PC-3 (cell line): ENCODE measurements at regions of chr3 and their contacts with region 1.

Region 1: DNA sequence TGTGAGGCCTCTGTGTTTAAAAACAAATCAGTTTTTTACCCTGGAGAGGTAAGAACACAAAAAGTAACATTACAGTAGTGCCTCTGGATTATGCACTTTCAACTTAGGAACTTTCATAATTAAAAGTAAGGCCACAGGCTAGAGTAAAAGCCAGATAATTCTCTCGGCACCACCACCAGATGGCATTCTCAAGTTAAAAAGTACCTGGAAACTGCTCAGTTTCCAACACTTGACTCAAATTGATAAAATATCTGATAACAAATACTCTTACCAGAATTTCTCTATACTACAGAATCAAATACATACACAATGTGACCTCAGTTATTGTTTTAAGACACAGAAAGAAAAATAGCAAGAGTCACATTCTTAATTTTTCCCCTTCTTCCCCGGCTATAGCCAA is 19.9 kb downstream of the SPICE1 start:
- DNase-seq: peak; percentile 78
- ATAC-seq: peak; percentile 64
- H3K4me3 ChIP-seq: no peak overlapping the region
- H3K27ac ChIP-seq: peak overlapping the region; percentile 9; the same call in 1 of the 2 replicates
- H3K4me1 ChIP-seq: peaks cover 25% of the 10 kb centered on the region
- H3K27me3 ChIP-seq: no peaks in the 10 kb centered on the region
- CTCF ChIP-seq: peak; percentile 91

Region 2: DNA sequence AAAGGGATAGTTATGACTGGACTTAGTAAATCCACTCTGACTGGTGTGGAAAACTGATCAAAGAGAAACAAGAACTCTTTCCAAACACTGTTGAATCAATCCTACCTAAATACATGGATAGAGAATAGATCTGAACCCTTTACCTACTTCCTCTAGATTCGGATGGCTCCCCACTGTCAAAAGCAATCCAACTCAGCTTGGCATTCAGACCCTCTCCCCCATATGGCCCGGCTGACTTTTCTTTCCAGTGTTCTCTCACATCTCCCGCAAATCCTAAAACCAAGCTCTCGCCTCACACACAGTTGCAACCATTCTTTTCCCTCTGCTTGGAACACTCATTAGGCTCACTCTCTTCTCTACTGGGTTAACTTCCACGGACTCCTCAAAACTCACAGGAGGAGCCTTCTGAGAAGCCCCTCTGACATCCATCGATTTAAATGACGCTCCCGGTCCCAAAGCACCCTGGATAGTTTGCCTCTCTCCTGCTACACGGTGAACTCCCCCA is 19.3 kb after region 1 on chr3:
- CTCF ChIA-PET with region 1: interaction called, 3 read pairs
- POLR2A ChIA-PET with region 1: no interaction called
- intact Hi-C with region 1: loop called (anchors 2 kb)
- DNase-seq: no peak
- ATAC-seq: no peak; the same call in 1 of the 2 replicates
- H3K4me3 ChIP-seq: peak overlapping the region; percentile 89
- H3K27ac ChIP-seq: peak overlapping the region; percentile 81
- H3K4me1 ChIP-seq: peaks cover 19% of the 10 kb centered on the region
- H3K27me3 ChIP-seq: no peaks in the 10 kb centered on the region
- CTCF ChIP-seq: no peak

Region 3: GRCh38 chr3:113552851-113553250 is 57.8 kb after region 1 on chr3:
- CTCF ChIA-PET with region 1: interaction called, 7 read pairs
- POLR2A ChIA-PET with region 1: interaction called, 3 read pairs
- intact Hi-C with region 1: loop called (anchors 1 kb)
- DNase-seq: peak; percentile 26
- ATAC-seq: no peak
- H3K4me3 ChIP-seq: no peak overlapping the region
- H3K27ac ChIP-seq: peak overlapping the region; percentile 96
- H3K4me1 ChIP-seq: peaks cover 63% of the 10 kb centered on the region
- H3K27me3 ChIP-seq: no peaks in the 10 kb centered on the region
- CTCF ChIP-seq: peak; percentile 41

Region 4: DNA sequence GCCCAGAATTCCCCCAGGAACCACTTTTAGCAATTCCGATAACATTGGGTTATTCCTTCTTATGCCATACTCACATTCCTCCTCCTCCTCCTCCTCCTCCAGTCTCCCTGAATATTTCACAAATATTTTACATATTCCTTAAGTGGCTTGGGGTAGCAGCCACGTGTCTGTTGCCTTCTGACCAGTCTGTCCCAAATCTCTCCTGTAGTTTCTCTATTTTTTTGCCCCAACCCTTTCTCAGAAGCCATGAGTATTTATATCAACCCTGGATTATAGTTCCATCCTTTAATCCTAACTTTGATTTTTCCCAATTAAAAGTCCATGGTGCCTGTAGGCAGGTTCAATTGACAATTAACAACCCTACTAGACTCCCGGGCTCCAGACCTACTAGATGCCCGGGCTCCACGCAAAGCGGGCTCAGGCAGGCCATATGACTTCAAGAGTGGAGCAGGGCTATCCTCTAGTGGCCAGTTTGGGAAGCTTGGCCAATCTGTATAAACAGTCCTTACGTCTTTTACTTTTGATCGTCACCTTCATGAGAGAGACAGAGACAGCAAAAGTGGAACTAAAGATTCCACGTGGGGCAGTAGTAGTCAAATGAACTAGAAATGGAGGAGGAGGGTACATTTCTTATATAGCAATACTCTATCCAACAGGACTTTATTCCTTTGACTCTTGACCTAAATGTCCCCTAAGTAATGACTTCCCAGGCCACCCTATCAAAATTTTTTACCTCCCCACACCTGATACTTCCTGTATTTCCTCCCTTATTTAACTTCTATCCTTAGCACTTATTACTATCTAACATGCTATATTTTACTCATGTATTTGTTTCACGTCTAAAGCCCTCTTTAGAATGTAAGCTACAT is 131.7 kb after region 1 on chr3:
- CTCF ChIA-PET with region 1: interaction called, 3 read pairs
- POLR2A ChIA-PET with region 1: no interaction called
- intact Hi-C with region 1: loop called (anchors 1 kb)
- DNase-seq: peak; percentile 70
- ATAC-seq: peak; percentile 84
- H3K4me3 ChIP-seq: no peak overlapping the region
- H3K27ac ChIP-seq: no peak overlapping the region
- H3K4me1 ChIP-seq: no peaks in the 10 kb centered on the region
- H3K27me3 ChIP-seq: no peaks in the 10 kb centered on the region
- CTCF ChIP-seq: peak; percentile 96

Region 5: DNA sequence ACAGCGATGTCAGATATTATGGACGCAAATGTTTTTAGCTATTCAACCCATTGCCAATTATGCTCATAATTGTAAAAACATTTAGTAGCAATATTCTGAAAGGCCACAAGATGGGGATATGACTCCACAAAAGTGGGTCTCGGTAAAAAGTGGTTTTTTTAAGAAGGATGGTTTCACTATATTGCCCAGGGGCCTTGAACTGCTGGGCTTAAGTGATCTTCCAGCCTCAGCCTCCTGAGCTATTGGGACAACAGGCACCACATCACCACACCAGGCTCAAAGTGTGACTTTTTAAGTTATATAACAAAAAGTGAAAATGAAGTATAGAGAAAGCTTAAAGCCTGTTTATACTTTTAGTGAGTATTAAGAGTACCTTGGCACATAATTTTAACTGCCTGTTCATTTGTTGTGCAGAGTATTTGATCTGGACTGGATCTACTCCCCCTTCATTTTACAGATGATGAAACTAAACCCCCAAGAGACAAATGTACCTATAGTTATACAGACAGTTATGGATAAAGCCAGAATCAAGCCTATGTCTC is 241.6 kb after region 1 on chr3:
- CTCF ChIA-PET with region 1: interaction called, 11 read pairs
- POLR2A ChIA-PET with region 1: no interaction called
- intact Hi-C with region 1: no loop called
- DNase-seq: peak; percentile 85
- ATAC-seq: peak; percentile 77
- H3K4me3 ChIP-seq: no peak overlapping the region
- H3K27ac ChIP-seq: no peak overlapping the region
- H3K4me1 ChIP-seq: no peaks in the 10 kb centered on the region
- H3K27me3 ChIP-seq: no peaks in the 10 kb centered on the region
- CTCF ChIP-seq: peak; percentile 83